Activated naive CD4-positive, alpha-beta T cell treated with anti-CD3 and anti-CD28 coated beads for 36 hours (primary cell): ENCODE measurements at regions of chr20 and their contacts with region 1.

Region 1: GRCh38 chr20:44747166-44748004 is 1.7 kb downstream of the KCNK15 start:
- DNase-seq: peak; percentile 89
- H3K4me3 Mint-ChIP-seq: peak overlapping the region; percentile 83
- H3K27ac Mint-ChIP-seq: peak overlapping the region; percentile 80
- H3K4me1 Mint-ChIP-seq: peaks cover 17% of the 10 kb centered on the region
- H3K27me3 Mint-ChIP-seq: peaks cover 11% of the 10 kb centered on the region

Region 2: GRCh38 chr20:44810391-44811149 is 63.2 kb after region 1 on chr20 and contains the start of gene RIMS4:
- CTCF ChIA-PET with region 1: interaction called, 4 read pairs
- intact Hi-C with region 1: loop called (anchors 5 kb)
- DNase-seq: no peak
- H3K4me3 Mint-ChIP-seq: peak within 1 kb of the TSS; percentile 46
- H3K27ac Mint-ChIP-seq: no peak within 1 kb of the TSS
- H3K4me1 Mint-ChIP-seq: peaks cover 3% of the 10 kb centered on the region
- H3K27me3 Mint-ChIP-seq: peaks cover 45% of the 10 kb centered on the region
- total RNA-seq, gene RIMS4: 0.07 TPM

Region 3: GRCh38 chr20:44866703-44867335 is 119.4 kb after region 1 on chr20:
- CTCF ChIA-PET with region 1: interaction called, 26 read pairs
- intact Hi-C with region 1: loop called (anchors 1 kb)
- DNase-seq: no peak
- H3K4me3 Mint-ChIP-seq: peak overlapping the region; percentile 52
- H3K27ac Mint-ChIP-seq: no peak overlapping the region
- H3K4me1 Mint-ChIP-seq: peaks cover 9% of the 10 kb centered on the region
- H3K27me3 Mint-ChIP-seq: peaks cover 3% of the 10 kb centered on the region

Region 4: DNA sequence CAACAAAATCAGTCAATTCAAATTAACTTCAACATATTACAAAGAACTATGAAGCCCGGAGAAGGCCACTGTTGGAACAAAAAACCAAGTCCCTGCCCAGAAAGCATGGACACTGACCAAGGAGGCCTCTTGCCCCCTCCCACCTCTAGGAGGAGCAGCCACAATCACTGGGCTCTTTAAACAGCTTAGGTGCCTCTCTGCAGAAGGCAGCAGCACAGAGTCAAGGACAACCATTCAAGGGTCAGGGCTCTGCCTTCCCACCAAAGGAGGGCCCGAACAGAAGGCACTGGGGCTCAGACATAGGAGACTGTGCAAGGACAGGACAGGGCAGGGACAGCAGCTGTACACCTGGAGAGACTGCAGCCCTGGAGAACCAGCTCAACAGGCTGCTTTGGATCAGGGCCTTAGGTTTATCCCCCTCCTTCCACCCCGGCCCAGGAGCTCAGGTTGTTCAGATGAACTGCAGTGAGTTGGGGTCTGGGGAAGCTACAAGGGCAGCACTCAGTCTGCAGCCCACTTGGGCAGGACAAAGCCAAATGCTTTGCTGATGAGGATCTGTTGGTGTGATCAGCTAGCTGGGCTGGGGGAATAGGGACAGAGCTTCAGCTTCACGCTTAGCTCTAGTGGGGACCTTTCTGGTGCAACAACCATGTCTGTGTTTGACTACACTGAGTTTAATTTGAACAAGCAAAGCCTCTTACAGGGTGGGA is 195.0 kb after region 1 on chr20:
- CTCF ChIA-PET with region 1: no interaction called
- intact Hi-C with region 1: no loop called
- DNase-seq: no peak
- H3K4me3 Mint-ChIP-seq: no peak overlapping the region
- H3K27ac Mint-ChIP-seq: no peak overlapping the region
- H3K4me1 Mint-ChIP-seq: peaks cover 2% of the 10 kb centered on the region
- H3K27me3 Mint-ChIP-seq: no peaks in the 10 kb centered on the region

Region 5: DNA sequence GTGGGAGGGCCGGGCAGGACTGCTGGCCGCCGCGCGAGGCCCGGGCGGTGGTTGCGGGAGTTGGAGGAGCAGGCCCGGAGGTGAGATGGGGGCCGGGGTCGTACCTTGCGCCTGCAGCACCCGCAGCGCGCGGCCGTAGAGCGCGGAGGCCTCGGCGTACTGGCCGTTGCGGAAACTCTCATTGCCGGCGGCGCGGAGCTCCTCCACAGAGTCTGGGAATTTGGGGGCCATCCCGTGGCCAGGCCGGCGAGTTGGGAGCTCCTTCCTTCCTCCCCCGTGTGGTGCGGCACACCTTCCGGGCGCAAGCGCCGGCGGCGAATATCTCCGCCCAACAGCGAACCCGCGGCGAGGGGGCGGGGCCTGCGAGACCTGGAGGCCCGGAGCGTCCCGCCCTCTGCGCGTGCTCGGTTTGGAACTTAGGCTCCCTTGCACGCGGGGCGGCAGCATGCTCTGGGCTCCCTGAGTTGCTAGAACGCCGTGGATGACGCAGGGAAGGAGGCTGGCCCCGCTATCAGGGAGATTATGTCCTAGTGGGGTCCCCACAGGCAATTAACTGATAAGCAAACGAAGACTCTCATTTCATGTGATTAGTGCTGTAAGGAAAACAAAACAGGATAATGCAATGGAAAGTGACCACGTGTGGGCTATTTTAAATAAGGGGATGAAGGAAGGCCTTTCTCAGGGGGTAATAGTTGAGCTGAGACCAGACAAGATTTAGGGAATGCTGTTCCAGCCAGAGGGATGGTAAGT is 212.9 kb after region 1 on chr20 and contains the start of gene TOMM34:
- CTCF ChIA-PET with region 1: interaction called, 3 read pairs
- intact Hi-C with region 1: loop called (anchors 2 kb)
- DNase-seq: peak; percentile 96
- H3K4me3 Mint-ChIP-seq: peak within 1 kb of the TSS; percentile 93
- H3K27ac Mint-ChIP-seq: peak within 1 kb of the TSS; percentile 97
- H3K4me1 Mint-ChIP-seq: peaks cover 64% of the 10 kb centered on the region
- H3K27me3 Mint-ChIP-seq: no peaks in the 10 kb centered on the region
- total RNA-seq, gene TOMM34: 44.0 to 45.9 TPM